Activated CD4-positive, alpha-beta T cell treated with anti-CD3 and anti-CD28 coated beads for 36 hours (primary cell): ENCODE measurements at regions of chr9 and their contacts with region 1.

Region 1: GRCh38 chr9:37913480-37914153 is 9.7 kb upstream of the SLC25A51 start:
- DNase-seq: peak; percentile 88
- ATAC-seq: peak; percentile 91
- H3K4me3 Mint-ChIP-seq: no peak overlapping the region
- H3K27ac Mint-ChIP-seq: no peak overlapping the region
- H3K4me1 Mint-ChIP-seq: no peaks in the 10 kb centered on the region
- H3K27me3 Mint-ChIP-seq: no peaks in the 10 kb centered on the region

Region 2: GRCh38 chr9:37466037-37466709 is 447.4 kb before region 1 on chr9:
- CTCF ChIA-PET with region 1: no interaction called
- POLR2A ChIA-PET with region 1: no interaction called
- intact Hi-C with region 1: no loop called
- DNase-seq: peak; percentile 47
- ATAC-seq: peak; percentile 3
- H3K4me3 Mint-ChIP-seq: peak overlapping the region; percentile 97
- H3K27ac Mint-ChIP-seq: peak overlapping the region; percentile 96
- H3K4me1 Mint-ChIP-seq: peaks cover 30% of the 10 kb centered on the region
- H3K27me3 Mint-ChIP-seq: no peaks in the 10 kb centered on the region

Region 3: DNA sequence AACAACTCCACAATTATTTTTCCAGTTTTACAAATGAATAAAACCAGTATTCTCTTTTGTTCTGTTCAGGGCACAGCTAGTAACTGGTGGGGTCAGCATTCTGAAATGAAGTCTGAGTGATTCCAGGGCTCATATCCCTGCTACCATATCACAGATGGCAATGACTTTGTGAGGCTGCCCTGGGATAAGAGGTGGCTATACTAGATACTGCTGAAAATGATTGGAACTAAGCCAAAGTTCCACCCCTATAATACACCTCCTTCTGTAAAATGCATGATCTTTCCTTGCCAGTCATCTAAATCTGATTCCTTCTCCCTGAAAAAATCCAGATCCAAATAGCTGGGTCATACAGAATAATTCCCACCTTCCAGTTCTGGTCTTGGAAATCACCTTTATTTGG is 24.1 kb before region 1 on chr9:
- CTCF ChIA-PET with region 1: no interaction called
- POLR2A ChIA-PET with region 1: no interaction called
- intact Hi-C with region 1: no loop called
- DNase-seq: no peak
- ATAC-seq: no peak
- H3K4me3 Mint-ChIP-seq: no peak overlapping the region
- H3K27ac Mint-ChIP-seq: no peak overlapping the region
- H3K4me1 Mint-ChIP-seq: peaks cover 5% of the 10 kb centered on the region
- H3K27me3 Mint-ChIP-seq: no peaks in the 10 kb centered on the region

Region 4: DNA sequence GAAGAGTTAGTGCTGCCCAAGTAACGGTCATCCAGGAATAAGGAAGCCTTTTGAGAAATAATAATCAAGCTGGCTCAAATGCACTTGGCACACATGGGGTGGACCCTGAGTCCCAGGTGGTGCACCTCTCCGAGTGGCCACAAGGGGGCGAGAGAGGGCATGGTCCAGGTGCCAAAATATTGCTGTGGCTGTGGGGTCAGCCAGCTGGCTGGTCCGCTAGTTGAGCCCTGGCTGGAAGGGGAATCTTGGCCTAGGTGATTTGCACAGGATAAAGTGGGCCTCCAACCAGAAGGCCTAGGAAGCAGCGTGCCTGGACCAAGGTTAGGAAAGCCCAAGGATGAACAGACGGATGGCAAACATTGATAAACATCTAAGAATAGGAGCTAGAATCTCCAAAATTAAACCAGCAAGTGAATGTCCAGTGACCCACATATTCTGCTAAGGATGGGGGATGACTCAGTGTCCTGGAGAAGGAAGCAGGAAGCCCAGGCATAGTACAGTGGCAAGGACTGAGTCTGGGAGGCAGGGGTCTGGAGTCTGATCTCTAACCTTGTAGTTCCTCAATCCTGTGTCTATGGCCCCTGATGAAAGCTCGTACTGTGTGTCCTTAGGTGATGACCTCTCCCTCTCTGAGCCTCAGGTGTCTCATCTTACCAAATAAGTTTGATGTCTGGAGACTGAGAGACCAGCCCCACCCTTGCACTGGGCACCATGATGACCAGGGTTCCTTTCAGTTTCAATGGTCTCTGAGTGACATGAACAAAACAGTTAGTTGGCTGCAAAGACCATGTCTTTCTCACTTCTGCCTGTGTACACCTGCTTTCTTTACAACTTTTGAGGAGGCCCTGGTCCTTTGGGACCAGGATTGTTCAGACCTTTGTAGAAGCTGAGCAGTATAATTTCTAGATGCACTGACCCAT is 174.6 kb after region 1 on chr9:
- CTCF ChIA-PET with region 1: interaction called, 37 read pairs
- POLR2A ChIA-PET with region 1: interaction called, 4 read pairs
- intact Hi-C with region 1: loop called (anchors 1 to 5 kb)
- DNase-seq: peak; percentile 82
- ATAC-seq: peak; percentile 65
- H3K4me3 Mint-ChIP-seq: no peak overlapping the region
- H3K27ac Mint-ChIP-seq: no peak overlapping the region
- H3K4me1 Mint-ChIP-seq: no peaks in the 10 kb centered on the region
- H3K27me3 Mint-ChIP-seq: no peaks in the 10 kb centered on the region

Region 5: DNA sequence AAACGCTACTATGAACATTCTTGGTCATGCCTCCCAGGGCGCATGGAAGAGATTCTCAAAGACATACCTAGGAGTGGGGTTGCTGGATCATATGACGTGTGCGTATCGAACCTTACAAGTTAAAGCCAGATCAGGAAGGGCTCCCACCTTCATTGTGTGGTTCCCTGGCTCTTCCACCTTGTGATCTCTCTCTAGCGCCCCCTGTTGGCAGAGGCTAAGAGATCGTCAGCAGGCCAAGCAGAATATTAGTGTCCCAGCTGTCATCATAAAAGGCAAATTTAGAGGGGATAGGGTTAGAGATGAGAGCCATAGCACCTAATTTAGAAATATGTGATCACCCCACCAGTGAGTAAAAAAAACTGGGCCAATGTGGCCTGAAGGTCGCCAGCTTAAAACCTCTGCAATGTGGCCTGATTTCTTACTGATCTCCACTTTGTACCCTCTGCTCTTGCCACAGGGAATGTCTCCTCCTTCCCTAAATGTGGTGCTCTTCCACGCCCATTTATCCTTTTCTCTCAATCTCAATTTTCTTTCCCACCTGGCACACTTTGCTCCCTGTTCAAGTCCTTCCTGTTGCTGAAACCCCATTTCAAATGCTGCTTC is 247.1 kb after region 1 on chr9:
- CTCF ChIA-PET with region 1: interaction called, 28 read pairs
- POLR2A ChIA-PET with region 1: no interaction called
- intact Hi-C with region 1: loop called (anchors 1 kb)
- DNase-seq: peak; percentile 83
- ATAC-seq: peak; percentile 72
- H3K4me3 Mint-ChIP-seq: no peak overlapping the region
- H3K27ac Mint-ChIP-seq: no peak overlapping the region
- H3K4me1 Mint-ChIP-seq: peaks cover 2% of the 10 kb centered on the region
- H3K27me3 Mint-ChIP-seq: no peaks in the 10 kb centered on the region

Region 6: GRCh38 chr9:38263532-38263931 is 349.9 kb after region 1 on chr9:
- CTCF ChIA-PET with region 1: interaction called, 5 read pairs
- POLR2A ChIA-PET with region 1: no interaction called
- intact Hi-C with region 1: loop called in 1 of 2 experiments (anchors 5 kb)
- DNase-seq: no peak
- ATAC-seq: no peak
- H3K4me3 Mint-ChIP-seq: no peak overlapping the region
- H3K27ac Mint-ChIP-seq: no peak overlapping the region
- H3K4me1 Mint-ChIP-seq: no peaks in the 10 kb centered on the region
- H3K27me3 Mint-ChIP-seq: peaks cover 7% of the 10 kb centered on the region

Region 7: DNA sequence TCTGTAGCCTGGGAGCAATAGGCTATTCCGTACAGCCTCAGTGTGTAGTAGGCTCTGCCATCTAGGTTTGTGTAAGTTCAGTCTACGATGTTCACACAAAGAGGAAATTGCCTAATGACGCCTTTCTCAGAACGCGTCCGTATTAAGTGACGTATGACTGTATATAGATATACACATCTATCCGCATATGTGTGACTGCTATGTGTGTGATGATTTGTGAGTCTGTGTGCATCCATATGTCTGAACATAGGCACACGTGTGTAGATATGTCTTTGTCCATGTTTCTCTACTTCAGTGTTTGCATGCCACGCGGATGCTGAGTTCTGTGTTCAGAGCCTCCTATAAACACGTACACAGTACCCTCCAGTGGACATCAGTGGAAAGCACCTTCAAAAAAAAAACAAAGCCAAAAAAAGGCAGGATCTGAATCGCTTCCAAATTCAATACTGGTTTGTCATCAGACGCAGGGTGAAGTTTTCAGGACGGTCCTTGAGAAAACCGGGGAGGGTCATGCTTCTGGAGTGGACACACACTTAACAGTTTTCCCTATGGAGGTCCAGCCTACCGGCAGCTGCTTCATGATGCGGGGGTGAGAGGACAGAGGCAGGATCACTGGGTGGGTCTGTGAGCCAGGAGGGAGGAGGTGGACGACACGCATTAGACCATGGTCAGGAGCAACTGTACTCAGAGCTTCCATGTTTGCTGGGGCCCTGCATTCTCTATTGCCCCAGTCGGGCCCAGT is 449.4 kb after region 1 on chr9:
- CTCF ChIA-PET with region 1: interaction called, 5 read pairs
- POLR2A ChIA-PET with region 1: no interaction called
- intact Hi-C with region 1: loop called (anchors 1 to 2 kb)
- DNase-seq: peak; percentile 44
- ATAC-seq: peak; percentile 75
- H3K4me3 Mint-ChIP-seq: no peak overlapping the region
- H3K27ac Mint-ChIP-seq: peak overlapping the region; percentile 11
- H3K4me1 Mint-ChIP-seq: peaks cover 4% of the 10 kb centered on the region
- H3K27me3 Mint-ChIP-seq: peaks cover 4% of the 10 kb centered on the region

Region 8: GRCh38 chr9:38401994-38402393 is 488.4 kb after region 1 on chr9:
- CTCF ChIA-PET with region 1: no interaction called
- POLR2A ChIA-PET with region 1: no interaction called
- intact Hi-C with region 1: loop called in 1 of 2 experiments (anchors 2 kb)
- DNase-seq: no peak
- ATAC-seq: no peak
- H3K4me3 Mint-ChIP-seq: no peak overlapping the region
- H3K27ac Mint-ChIP-seq: no peak overlapping the region
- H3K4me1 Mint-ChIP-seq: no peaks in the 10 kb centered on the region
- H3K27me3 Mint-ChIP-seq: peaks cover 11% of the 10 kb centered on the region

Region 9: GRCh38 chr9:38432922-38433510 is 519.4 kb after region 1 on chr9:
- CTCF ChIA-PET with region 1: interaction called, 6 read pairs
- POLR2A ChIA-PET with region 1: no interaction called
- intact Hi-C with region 1: loop called in 1 of 2 experiments (anchors 5 kb)
- DNase-seq: peak; percentile 13
- ATAC-seq: peak; percentile 23
- H3K4me3 Mint-ChIP-seq: no peak overlapping the region
- H3K27ac Mint-ChIP-seq: no peak overlapping the region
- H3K4me1 Mint-ChIP-seq: peaks cover 6% of the 10 kb centered on the region
- H3K27me3 Mint-ChIP-seq: peaks cover 2% of the 10 kb centered on the region